PC-3 (cell line): ENCODE measurements at regions of chr3 and their contacts with region 1.

Region 1: GRCh38 chr3:195106418-195106906 is 164.5 kb downstream of the XXYLT1 start:
- DNase-seq: peak; percentile 69
- ATAC-seq: peak; percentile 49
- H3K4me3 ChIP-seq: peak overlapping the region; percentile 34; the same call in 1 of the 2 replicates
- H3K27ac ChIP-seq: peak overlapping the region; percentile 88
- H3K4me1 ChIP-seq: peaks cover 50% of the 10 kb centered on the region
- H3K27me3 ChIP-seq: no peaks in the 10 kb centered on the region
- CTCF ChIP-seq: peak; percentile 98

Region 2: GRCh38 chr3:194985031-194985578 is 121.4 kb before region 1 on chr3:
- CTCF ChIA-PET with region 1: no interaction called
- POLR2A ChIA-PET with region 1: no interaction called
- intact Hi-C with region 1: loop called (anchors 1 kb)
- DNase-seq: peak; percentile 86
- ATAC-seq: peak; percentile 84
- H3K4me3 ChIP-seq: peak overlapping the region; percentile 51; the same call in 1 of the 2 replicates
- H3K27ac ChIP-seq: peak overlapping the region; percentile 10; the same call in 1 of the 2 replicates
- H3K4me1 ChIP-seq: peaks cover 43% of the 10 kb centered on the region
- H3K27me3 ChIP-seq: no peaks in the 10 kb centered on the region
- CTCF ChIP-seq: peak; percentile 68

Region 3: DNA sequence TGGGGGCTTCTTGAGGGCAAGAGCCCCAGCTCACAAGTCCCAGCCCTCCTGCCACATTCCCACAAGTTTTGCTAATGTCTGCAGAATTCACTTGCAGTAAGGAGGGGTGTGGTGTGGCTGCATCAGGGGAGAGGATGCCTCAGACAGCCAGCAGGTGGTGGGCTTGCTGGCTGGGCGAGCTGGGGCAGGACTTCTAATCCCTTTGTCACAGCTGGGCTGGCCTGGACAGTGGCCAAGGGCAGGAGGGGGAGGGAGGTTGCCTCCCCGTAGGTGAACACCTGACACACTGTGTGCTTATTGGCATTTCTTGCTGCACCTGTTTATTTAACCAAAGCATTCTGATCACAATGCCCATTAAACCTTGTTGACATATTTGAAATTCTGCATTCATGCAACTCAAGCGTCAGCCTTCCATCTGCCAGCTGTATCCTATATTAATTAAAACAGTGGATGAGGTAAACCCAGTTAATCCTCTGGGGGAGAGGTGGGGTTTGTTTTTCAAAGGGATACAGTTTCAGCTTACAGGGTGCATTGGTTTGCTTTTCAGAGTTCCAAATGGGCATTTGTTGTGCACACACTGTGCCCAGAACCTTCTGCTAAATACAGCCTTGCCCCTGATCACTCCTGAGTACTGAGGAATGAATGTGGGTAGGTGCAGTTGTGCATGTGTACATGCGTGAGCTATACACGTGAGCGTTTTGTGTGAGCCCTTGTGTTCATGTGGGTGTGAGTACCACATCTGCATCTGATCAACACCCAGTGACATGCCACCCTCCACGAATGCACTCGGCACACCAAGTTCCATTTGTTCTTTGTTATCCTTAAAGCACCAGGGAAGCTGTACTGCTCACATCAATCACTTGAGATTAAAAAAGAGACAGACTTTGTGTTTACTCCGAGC is 104.3 kb before region 1 on chr3:
- CTCF ChIA-PET with region 1: no interaction called
- POLR2A ChIA-PET with region 1: no interaction called
- intact Hi-C with region 1: loop called (anchors 1 kb)
- DNase-seq: peak; percentile 87
- ATAC-seq: peak; percentile 96
- H3K4me3 ChIP-seq: no peak overlapping the region
- H3K27ac ChIP-seq: no peak overlapping the region
- H3K4me1 ChIP-seq: peaks cover 11% of the 10 kb centered on the region; the same call in 1 of the 2 replicates
- H3K27me3 ChIP-seq: no peaks in the 10 kb centered on the region
- CTCF ChIP-seq: peak; percentile 83

Region 4: GRCh38 chr3:195030791-195031321 is 75.6 kb before region 1 on chr3:
- CTCF ChIA-PET with region 1: no interaction called
- POLR2A ChIA-PET with region 1: no interaction called
- intact Hi-C with region 1: loop called (anchors 1 kb)
- DNase-seq: peak; percentile 94
- ATAC-seq: peak; percentile 84
- H3K4me3 ChIP-seq: peak overlapping the region; percentile 25
- H3K27ac ChIP-seq: peak overlapping the region; percentile 89
- H3K4me1 ChIP-seq: peaks cover 44% of the 10 kb centered on the region
- H3K27me3 ChIP-seq: no peaks in the 10 kb centered on the region
- CTCF ChIP-seq: no peak